Sciatic nerve (tissue), 2 donors: ENCODE measurements at regions of chr17 and their contacts with region 1.

Region 1: DNA sequence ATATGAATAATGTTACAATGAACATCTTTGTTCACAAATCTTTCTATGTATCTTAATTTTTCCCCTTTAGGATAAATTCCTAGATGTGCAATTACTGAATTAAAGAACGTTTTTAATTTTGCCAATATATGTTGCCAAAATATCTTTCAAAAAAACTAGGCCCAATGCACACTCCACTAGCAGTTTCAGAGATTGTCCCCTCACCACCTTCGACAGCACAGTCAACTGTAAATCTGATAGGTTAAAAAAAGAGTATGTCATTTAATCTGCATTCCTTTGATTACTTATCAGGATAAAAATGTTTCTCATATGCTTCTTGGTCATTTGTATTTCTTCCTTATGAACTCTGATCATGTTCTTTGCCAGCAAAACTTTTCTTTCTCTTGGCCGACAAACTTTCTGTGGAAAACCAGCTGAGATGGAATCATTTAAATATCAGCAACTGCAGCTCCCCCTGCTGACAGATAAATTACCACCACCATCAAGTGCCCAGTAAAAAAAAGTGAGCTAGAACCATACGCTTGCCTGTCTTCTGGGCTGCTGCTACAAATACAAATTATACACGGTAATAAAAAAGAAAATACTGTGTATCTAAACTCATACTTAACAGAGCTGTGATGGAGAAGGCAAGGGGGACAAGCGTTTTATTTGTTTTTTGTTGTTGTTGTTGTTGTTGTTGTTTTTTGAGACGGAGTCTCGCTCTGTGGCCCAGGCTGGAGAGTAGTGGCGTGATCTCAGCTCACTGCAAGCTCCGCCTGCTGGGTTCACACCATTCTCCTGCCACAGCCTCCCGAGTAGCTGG is 19.6 kb upstream of the KANSL1 start:
- DNase-seq: peak; percentile 74
- ATAC-seq: peak; percentile 90

Region 2: DNA sequence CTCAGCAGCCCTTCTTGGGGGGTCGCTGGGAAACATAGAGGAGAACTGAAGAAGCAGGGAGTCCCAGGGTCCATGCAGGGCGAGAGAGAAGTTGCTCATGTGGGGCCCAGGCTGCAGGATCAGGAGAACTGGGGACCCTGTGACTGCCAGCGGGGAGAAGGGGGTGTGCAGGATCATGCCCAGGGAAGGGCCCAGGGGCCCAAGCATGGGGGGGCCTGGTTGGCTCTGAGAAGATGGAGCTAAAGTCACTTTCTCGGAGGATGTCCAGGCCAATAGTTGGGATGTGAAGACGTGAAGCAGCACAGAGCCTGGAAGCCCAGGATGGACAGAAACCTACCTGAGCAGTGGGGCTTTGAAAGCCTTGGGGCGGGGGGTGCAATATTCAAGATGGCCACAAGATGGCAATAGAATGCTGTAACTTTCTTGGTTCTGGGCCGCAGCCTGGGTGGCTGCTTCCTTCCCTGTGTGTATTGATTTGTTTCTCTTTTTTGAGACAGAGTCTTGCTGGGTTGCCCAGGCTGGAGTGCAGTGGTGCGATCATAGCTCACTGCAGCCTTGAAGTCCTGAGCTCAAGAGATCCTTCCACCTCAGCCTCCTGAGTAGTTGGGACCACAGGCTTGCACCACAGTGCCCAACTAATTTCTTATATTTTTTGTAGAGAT is 210.4 kb before region 1 on chr17:
- intact Hi-C with region 1: loop called (anchors 10 kb)
- DNase-seq: peak; percentile 82
- ATAC-seq: peak; percentile 90

Region 3: GRCh38 chr17:46035112-46035818 is 177.6 kb before region 1 on chr17:
- intact Hi-C with region 1: loop called (anchors 10 kb)
- DNase-seq: no peak
- ATAC-seq: no peak

Region 4: DNA sequence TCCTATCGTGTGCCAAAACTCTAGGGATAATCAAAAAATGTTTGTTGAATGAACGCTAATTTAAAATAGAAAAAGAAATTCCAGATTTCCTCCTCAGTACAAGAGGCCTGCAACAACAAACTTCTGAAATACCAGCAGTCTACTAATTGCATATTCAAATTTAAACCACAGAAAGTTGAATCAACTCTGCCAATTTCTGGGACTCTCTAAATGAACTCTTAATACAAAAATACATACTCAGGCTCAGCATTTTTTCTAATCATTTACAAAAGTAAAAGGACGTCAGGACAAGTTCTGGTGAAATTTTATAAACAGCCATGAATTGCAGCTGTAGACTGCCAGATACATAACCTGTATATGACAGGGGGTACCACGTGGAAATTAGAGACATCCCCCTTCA is 68.6 kb before region 1 on chr17:
- intact Hi-C with region 1: no loop called
- DNase-seq: no peak
- ATAC-seq: no peak